CD14-positive monocyte (primary cell): ENCODE measurements at regions of chr7 and their contacts with region 1.

Region 1: DNA sequence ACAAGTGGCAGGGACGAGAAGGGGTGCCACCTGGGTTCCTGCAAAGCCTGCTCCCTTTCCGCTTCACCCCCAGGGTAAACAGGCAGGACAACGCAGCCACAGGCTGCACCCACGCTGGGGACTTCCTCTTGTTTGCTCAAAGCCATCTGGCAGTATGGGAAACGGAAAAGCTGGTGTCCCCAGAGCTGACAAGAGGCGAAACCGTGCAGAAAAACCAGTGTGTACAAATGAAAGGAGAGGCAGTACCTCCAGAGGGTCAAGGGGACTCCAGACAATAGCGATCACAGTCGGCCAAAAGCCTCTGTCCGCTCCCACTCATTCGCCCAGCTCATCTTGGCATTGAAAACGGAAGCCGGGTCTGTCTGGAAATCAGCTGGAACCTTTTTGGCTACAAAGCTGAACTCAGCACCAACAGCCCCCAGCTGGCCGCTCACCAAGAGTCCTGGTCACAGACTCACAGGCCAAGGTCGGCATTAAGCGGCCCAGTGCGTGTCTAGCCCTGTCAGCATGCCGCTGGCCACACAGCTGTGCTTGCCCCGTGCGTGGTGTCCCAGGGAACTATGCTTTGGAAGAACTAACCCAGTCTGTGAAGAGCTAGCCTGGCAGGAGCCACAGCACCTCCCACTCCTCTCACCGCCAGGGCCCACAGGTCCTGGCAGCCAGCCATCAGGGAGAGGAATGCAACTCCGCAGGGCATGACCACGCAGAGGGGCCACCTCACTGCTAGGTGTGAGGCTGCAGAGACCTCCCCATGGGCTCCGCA is 10.4 kb downstream of the TNS3 start:
- DNase-seq: peak in 2 of 3 donors; percentile 44 to 47
- H3K4me3 ChIP-seq: peak overlapping the region in 2 of 3 experiments; percentile 18 to 64
- H3K4me3 Mint-ChIP-seq: peak overlapping the region; percentile 75 to 82
- H3K27ac ChIP-seq: peak overlapping the region; percentile 90 to 91
- H3K27ac Mint-ChIP-seq: peak overlapping the region; percentile 90 to 98 (median 96)
- H3K4me1 ChIP-seq: peaks cover 80 to 82% of the 10 kb centered on the region in 2 donors
- H3K4me1 Mint-ChIP-seq: peaks cover 86% of the 10 kb centered on the region
- H3K27me3 ChIP-seq: no peaks in the 10 kb centered on the region
- H3K27me3 Mint-ChIP-seq: peaks cover 0 to 2% (median 0%) of the 10 kb centered on the region in 3 donors
- CTCF ChIP-seq: no peak

Region 2: DNA sequence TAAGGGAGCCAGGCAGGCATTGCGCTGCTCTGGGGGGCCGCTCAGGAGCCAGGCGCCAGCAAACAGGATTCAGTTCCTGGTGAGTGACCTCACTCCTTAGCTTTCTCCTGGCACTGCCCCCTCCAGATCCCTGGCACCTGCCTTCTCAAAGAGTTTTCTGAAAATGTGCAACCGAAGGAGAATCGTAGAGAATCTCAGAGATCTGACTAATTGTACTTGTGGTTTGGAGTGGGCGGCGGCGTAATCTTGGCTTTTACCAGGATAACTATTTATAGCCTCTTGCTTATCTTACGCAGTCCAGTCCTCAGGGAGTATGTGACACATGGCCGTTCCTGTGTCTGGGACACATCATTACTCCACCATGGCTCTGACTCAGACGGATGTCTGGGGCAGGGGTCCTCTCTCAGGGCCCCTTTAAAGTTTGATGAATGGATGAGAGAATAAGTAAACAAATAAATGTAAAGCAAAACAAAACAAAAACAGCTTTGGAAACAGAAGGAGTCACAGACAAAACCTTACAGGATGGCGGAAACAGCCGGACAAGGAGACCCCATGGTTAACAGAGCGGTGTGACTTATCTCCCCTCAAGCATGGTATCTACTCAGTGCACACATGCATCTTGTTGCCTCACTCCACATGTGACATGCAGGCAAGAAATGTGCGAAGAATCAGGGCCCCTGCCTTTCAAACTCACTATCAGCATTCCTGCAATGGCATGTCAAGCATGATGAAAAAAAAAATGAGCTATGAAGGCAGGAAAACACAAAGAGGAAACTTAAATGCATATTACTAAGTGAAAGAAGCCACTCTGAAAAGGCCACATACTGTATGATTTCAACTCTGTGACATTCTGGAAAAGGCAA is 89.3 kb before region 1 on chr7:
- intact Hi-C with region 1: loop called (anchors 5 to 10 kb)
- DNase-seq: peak; percentile 70 to 82 (median 75)
- H3K4me3 ChIP-seq: peak overlapping the region in 1 of 3 experiments; percentile 5
- H3K4me3 Mint-ChIP-seq: peak overlapping the region; percentile 44 to 53
- H3K27ac ChIP-seq: peak overlapping the region in 1 of 2 donors; percentile 63
- H3K27ac Mint-ChIP-seq: peak overlapping the region; percentile 46 to 95 (median 87)
- H3K4me1 ChIP-seq: peaks cover 41 to 44% of the 10 kb centered on the region in 2 donors
- H3K4me1 Mint-ChIP-seq: peaks cover 54% of the 10 kb centered on the region
- H3K27me3 ChIP-seq: no peaks in the 10 kb centered on the region
- H3K27me3 Mint-ChIP-seq: peaks cover 0 to 2% (median 0%) of the 10 kb centered on the region in 3 donors
- CTCF ChIP-seq: no peak

Region 3: GRCh38 chr7:47497367-47498096 is 74.0 kb before region 1 on chr7:
- intact Hi-C with region 1: loop called in 1 of 2 experiments (anchors 5 kb)
- DNase-seq: peak; percentile 75 to 89 (median 81)
- H3K4me3 ChIP-seq: peak overlapping the region in 1 of 3 experiments; percentile 40
- H3K4me3 Mint-ChIP-seq: peak overlapping the region; percentile 58 to 90
- H3K27ac ChIP-seq: peak overlapping the region; percentile 76 to 89
- H3K27ac Mint-ChIP-seq: peak overlapping the region; percentile 90 to 98 (median 94)
- H3K4me1 ChIP-seq: peaks cover 65 to 71% of the 10 kb centered on the region in 2 donors
- H3K4me1 Mint-ChIP-seq: peaks cover 82% of the 10 kb centered on the region
- H3K27me3 ChIP-seq: no peaks in the 10 kb centered on the region
- H3K27me3 Mint-ChIP-seq: peaks cover 0 to 5% (median 0%) of the 10 kb centered on the region in 3 donors
- CTCF ChIP-seq: no peak

Region 4: GRCh38 chr7:47600199-47601118 is 28.9 kb after region 1 on chr7:
- intact Hi-C with region 1: loop called in 1 of 2 experiments (anchors 2 kb)
- DNase-seq: peak; percentile 43 to 63 (median 50)
- H3K4me3 ChIP-seq: peak overlapping the region in 1 of 3 experiments; percentile 8
- H3K4me3 Mint-ChIP-seq: peak overlapping the region; percentile 4 to 77
- H3K27ac ChIP-seq: peak overlapping the region; percentile 11 to 64
- H3K27ac Mint-ChIP-seq: peak overlapping the region; percentile 68 to 93 (median 81)
- H3K4me1 ChIP-seq: peaks cover 29 to 31% of the 10 kb centered on the region in 2 donors
- H3K4me1 Mint-ChIP-seq: peaks cover 42% of the 10 kb centered on the region
- H3K27me3 ChIP-seq: no peaks in the 10 kb centered on the region
- H3K27me3 Mint-ChIP-seq: peaks cover 0 to 9% (median 2%) of the 10 kb centered on the region in 3 donors
- CTCF ChIP-seq: no peak

Region 5: DNA sequence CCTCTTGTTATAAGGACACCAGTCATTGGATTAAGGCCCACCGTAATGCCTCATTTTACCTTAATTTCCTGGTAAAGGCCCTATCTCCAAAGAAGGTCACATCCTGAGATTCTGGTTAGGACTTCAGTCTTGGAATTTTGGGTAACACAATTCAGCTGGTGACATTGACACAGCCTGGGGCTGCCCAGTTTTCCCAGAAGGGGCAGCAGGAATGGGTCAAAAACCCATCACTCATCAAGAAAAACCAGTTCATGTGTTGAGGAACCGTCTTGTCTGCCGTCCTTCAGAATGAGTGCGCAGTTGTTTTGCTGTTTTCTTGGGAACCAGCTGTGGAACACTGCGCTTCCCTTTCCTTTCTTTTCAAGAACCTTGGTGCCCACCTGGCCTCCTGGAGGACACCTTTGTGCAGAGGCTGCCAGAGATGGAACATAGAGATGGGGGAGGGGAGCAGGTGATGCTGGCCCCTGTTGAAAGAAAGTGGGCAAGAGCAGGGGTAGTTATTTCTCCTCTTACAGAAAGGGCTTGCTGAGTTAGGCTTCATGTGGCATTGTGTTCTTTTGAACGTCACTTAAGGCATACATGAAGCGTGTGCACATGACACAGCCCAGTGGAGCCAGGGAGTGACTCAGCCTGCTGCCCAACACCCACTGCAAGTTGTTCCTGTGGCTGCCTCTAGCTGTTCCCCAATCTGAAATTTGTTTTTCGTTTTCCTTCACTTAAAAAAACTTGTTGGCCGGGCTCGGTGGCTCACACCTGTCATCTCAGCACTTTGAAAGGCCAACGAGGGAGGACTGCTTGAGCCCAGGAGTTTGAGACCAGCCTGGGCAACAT is 97.8 kb after region 1 on chr7:
- intact Hi-C with region 1: loop called (anchors 2 to 5 kb)
- DNase-seq: peak; percentile 92 to 98 (median 95)
- H3K4me3 ChIP-seq: peak overlapping the region; percentile 11 to 58 (median 13)
- H3K4me3 Mint-ChIP-seq: peak overlapping the region; percentile 64 to 83
- H3K27ac ChIP-seq: peak overlapping the region; percentile 95 to 99
- H3K27ac Mint-ChIP-seq: peak overlapping the region; percentile 96 to 100 (median 98)
- H3K4me1 ChIP-seq: peaks cover 28 to 30% of the 10 kb centered on the region in 2 donors
- H3K4me1 Mint-ChIP-seq: peaks cover 32% of the 10 kb centered on the region
- H3K27me3 ChIP-seq: no peaks in the 10 kb centered on the region
- H3K27me3 Mint-ChIP-seq: peaks cover 0 to 1% (median 0%) of the 10 kb centered on the region in 3 donors
- CTCF ChIP-seq: no peak

Region 6: DNA sequence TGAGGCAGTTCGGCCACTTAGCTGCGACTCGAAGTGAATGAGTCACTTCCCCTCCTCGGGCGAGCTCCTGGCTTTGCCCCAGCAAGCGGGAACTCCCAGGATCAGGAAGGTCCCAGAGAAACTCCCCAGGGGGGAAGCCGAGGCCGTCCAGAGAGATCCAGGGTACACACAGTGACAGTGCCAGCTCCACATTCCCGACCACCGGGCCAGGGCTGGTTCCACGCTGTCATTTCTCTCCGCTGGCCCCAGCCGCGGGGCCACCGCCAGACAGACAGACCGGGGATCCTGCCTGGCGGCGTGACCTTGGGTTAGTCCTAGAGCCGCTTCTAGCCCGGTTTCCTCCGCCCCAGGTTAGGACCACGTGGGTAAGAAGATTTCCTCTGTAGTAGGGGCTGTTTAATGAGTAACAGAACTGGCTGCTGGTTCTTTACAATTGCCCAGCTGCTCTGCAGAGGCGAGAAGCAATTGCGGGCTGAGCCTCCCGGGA is 517.1 kb after region 1 on chr7:
- intact Hi-C with region 1: loop called in 1 of 2 experiments (anchors 10 kb)
- DNase-seq: peak; percentile 86 to 97 (median 90)
- H3K4me3 ChIP-seq: peak overlapping the region; percentile 36 to 93 (median 57)
- H3K4me3 Mint-ChIP-seq: peak overlapping the region; percentile 88 to 92
- H3K27ac ChIP-seq: peak overlapping the region; percentile 97 to 99
- H3K27ac Mint-ChIP-seq: peak overlapping the region; percentile 97 to 100 (median 100)
- H3K4me1 ChIP-seq: peaks cover 60 to 81% of the 10 kb centered on the region in 2 donors
- H3K4me1 Mint-ChIP-seq: peaks cover 75% of the 10 kb centered on the region
- H3K27me3 ChIP-seq: no peaks in the 10 kb centered on the region
- H3K27me3 Mint-ChIP-seq: peaks cover 0 to 2% (median 0%) of the 10 kb centered on the region in 3 donors
- CTCF ChIP-seq: no peak